Transverse colon (tissue), 4 donors: ENCODE measurements at regions of chr5 and their contacts with region 1.

Region 1: GRCh38 chr5:63535840-63536602 is 426.2 kb downstream of the HTR1A start:
- DNase-seq: no peak
- H3K4me3 ChIP-seq: no peak overlapping the region
- H3K27ac ChIP-seq: no peak overlapping the region
- H3K4me1 ChIP-seq: no peaks in the 10 kb centered on the region
- H3K27me3 ChIP-seq: no peaks in the 10 kb centered on the region
- CTCF ChIP-seq: no peak
- EP300 ChIP-seq: no peak
- POLR2A ChIP-seq: no peak

Region 2: DNA sequence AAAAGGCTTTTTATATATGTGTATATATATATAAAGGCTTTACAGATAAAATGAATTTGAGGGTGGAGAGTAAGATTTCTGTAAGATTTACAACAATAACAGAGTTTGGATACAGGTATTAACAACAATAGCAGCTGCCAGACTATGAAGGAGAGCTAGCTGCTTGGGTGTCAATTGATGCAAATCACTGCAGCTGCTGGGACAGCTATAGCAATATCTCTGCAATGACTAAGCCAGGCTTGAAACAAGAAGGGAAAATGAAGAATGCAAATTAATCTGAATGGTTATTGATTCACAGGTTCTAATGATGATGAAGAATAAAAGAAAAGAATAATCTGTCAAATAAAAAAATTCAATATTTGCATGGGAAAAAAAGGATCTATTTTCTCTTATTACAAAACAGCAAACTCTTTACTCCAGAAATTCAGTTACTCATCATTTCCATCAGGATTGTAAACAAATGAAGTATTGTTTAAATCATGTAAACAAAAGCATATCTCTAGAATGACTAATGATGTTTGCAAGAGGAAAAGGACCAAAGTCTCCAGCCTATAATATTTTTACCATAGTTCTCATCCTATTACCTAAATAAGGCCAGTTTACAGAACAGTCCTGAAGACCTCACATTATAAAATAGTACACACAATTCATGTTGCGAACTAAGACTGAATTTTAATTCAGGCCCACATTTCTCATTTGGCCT is 207.2 kb after region 1 on chr5:
- in situ Hi-C with region 1: no loop called
- intact Hi-C with region 1: loop called (anchors 2 kb)
- DNase-seq: no peak
- H3K4me3 ChIP-seq: no peak overlapping the region
- H3K27ac ChIP-seq: no peak overlapping the region
- H3K4me1 ChIP-seq: no peaks in the 10 kb centered on the region
- H3K27me3 ChIP-seq: no peaks in the 10 kb centered on the region
- CTCF ChIP-seq: no peak
- EP300 ChIP-seq: no peak
- POLR2A ChIP-seq: no peak